Activated CD4-positive, alpha-beta T cell treated with anti-CD3 and anti-CD28 coated beads for 36 hours (primary cell): ENCODE measurements at regions of chr2 and their contacts with region 1.

Region 1: DNA sequence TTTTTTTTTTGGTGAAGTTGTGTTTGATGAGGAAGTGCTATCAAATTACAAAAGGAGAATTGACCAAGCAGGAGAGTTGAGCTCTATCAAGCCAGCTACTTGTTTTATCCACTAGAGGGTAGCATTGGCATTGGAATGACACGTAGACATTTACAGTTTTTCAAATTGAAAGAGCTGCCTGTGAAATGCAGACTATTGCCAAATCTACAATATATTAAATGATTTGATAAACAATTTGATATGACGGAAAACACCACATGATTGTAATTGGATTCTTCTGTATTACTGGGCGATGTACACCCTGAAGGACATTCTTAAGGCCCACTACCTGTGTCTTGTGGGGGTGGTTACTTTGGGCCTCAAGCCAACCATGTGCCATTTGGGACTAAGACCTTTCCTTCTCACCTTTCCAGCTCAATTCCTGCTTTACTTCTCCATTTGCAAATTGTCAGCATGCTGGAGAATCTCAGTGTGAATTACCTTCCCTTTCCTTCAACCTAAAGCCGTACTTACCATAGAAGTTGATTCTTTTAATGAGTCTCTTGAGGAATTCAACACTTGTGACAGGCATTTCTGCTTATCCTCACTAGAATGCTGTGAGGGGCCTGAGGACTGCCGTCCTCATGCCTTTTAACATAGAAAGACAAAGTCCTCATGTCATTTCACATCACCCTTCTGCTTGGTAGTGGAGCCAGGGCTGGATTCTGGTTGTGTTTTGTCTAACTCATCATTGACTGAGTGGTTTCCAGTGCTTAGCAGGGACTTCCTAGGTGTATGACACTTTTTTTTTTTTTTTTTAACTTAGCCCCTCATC is 134.8 kb upstream of the THUMPD2 start:
- DNase-seq: no peak
- ATAC-seq: peak; percentile 72
- H3K4me3 Mint-ChIP-seq: no peak overlapping the region
- H3K27ac Mint-ChIP-seq: peak overlapping the region; percentile 67
- H3K4me1 Mint-ChIP-seq: peaks cover 29% of the 10 kb centered on the region
- H3K27me3 Mint-ChIP-seq: peaks cover 11% of the 10 kb centered on the region

Region 2: DNA sequence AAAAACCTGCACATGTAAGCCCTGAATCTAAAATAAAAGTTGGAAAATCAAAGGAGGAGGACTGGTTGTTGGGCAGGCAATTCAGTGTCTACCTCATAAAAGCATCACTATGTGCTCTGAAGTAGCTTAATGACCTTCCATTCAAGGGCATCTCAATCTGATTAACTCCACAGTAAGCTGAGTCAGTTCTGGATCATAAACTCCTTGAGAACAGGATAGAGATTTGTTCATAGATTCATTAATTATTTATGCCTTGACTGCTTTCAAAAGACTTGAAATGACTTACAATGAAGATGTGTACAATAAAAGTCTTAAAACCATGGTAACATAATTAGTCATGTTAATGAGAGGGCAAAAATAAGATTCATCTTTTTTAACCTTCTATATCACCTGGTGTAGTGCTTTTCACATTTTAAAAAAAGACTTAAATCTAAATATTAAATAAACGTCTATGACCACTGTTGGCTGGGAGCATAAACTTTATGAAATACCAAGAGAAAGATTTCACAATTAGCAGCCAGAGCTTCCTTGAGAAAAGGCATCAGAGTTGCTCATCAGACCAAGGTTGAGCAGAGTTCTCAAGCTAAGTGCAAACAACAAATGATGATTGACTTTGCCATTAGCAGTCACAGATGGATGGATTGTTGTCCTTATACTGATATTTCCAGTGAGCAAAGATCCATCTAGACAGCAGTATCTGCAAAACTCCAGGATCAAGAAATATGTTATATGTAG is 102.5 kb after region 1 on chr2:
- CTCF ChIA-PET with region 1: no interaction called
- POLR2A ChIA-PET with region 1: no interaction called
- intact Hi-C with region 1: no loop called
- DNase-seq: no peak
- ATAC-seq: no peak
- H3K4me3 Mint-ChIP-seq: no peak overlapping the region
- H3K27ac Mint-ChIP-seq: no peak overlapping the region
- H3K4me1 Mint-ChIP-seq: no peaks in the 10 kb centered on the region
- H3K27me3 Mint-ChIP-seq: no peaks in the 10 kb centered on the region

Region 3: DNA sequence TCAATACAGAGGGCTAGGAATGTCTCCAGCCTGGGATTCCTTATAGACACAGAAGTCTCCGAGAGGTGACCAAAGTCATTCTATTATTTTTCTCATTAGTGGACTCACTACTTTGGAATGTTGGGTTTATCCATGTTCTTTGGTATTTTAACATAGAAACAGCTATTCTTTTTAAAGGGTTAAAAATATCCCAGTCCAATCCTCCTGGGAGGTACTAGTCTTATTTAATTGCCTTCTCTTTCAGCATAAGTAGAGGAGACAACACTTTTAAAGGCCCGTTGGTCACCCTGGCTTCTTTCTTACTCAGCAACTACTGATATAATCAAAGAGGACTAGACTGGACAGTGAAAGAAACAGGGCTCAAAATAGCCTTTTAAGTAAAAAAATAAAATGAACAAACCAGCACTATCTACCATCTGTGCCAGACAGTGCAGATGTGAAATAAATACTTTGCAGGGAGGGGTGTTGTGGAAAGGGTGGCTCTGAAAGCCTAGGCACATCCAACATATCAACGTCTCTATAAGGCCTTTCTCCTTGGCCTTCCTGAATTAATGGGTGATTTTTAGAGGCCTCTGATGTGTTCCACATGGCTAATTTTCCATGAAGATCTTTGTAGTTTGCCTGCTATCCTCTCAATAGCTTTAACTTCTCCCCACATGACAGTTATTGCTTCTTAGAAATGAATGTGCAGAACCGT is 199.6 kb after region 1 on chr2:
- CTCF ChIA-PET with region 1: no interaction called
- POLR2A ChIA-PET with region 1: no interaction called
- intact Hi-C with region 1: no loop called
- DNase-seq: no peak
- ATAC-seq: no peak
- H3K4me3 Mint-ChIP-seq: no peak overlapping the region
- H3K27ac Mint-ChIP-seq: no peak overlapping the region
- H3K4me1 Mint-ChIP-seq: no peaks in the 10 kb centered on the region
- H3K27me3 Mint-ChIP-seq: no peaks in the 10 kb centered on the region

Region 4: DNA sequence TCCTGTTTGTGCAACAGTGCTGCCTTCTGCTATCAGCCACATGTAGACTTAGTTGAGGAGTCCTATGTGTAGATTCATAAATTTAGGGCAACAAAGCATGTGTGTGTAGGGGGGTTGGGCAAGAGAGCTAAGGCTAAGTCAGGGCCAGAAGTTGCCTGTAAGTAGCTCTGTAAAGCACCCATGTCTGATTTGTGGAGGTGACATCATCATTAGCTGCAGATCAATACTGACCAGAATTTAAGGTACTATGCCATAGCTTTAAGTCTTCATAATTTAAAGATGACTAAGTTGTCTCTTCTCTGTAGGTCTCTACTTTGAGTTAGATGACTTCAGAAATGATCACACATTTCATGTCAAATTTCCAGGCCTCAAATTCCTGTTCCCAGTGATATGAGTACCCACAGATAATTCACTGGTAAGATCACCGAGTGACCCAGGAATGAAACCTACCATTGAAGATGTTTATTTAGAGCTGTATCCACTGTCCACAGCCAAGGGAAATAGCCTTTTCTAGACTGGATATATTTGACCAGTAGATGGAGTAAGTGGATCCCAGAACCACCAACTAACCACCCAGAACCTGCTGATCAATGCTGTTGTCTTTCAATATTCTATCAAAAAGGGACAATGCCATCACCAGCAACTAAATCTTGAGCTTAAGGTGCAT is 299.1 kb after region 1 on chr2:
- CTCF ChIA-PET with region 1: interaction called, 8 read pairs
- POLR2A ChIA-PET with region 1: interaction called, 3 read pairs
- intact Hi-C with region 1: loop called (anchors 10 kb)
- DNase-seq: no peak
- ATAC-seq: no peak
- H3K4me3 Mint-ChIP-seq: no peak overlapping the region
- H3K27ac Mint-ChIP-seq: peak overlapping the region; percentile 14
- H3K4me1 Mint-ChIP-seq: peaks cover 26% of the 10 kb centered on the region
- H3K27me3 Mint-ChIP-seq: no peaks in the 10 kb centered on the region

Region 5: GRCh38 chr2:40448468-40449079 is 534.7 kb after region 1 on chr2:
- CTCF ChIA-PET with region 1: interaction called, 5 read pairs
- POLR2A ChIA-PET with region 1: no interaction called
- intact Hi-C with region 1: loop called (anchors 5 to 10 kb)
- DNase-seq: peak; percentile 31
- ATAC-seq: no peak
- H3K4me3 Mint-ChIP-seq: no peak overlapping the region
- H3K27ac Mint-ChIP-seq: no peak overlapping the region
- H3K4me1 Mint-ChIP-seq: peaks cover 22% of the 10 kb centered on the region
- H3K27me3 Mint-ChIP-seq: peaks cover 39% of the 10 kb centered on the region

Region 6: GRCh38 chr2:40760071-40760666 is 846.3 kb after region 1 on chr2:
- CTCF ChIA-PET with region 1: interaction called, 3 read pairs
- POLR2A ChIA-PET with region 1: no interaction called
- intact Hi-C with region 1: loop called (anchors 2 to 5 kb)
- DNase-seq: peak; percentile 35
- ATAC-seq: peak; percentile 68
- H3K4me3 Mint-ChIP-seq: no peak overlapping the region
- H3K27ac Mint-ChIP-seq: no peak overlapping the region
- H3K4me1 Mint-ChIP-seq: peaks cover 4% of the 10 kb centered on the region
- H3K27me3 Mint-ChIP-seq: no peaks in the 10 kb centered on the region

Region 7: GRCh38 chr2:41414486-41415230 is 1500.8 kb after region 1 on chr2:
- CTCF ChIA-PET with region 1: no interaction called
- POLR2A ChIA-PET with region 1: no interaction called
- intact Hi-C with region 1: loop called in 1 of 2 experiments (anchors 10 kb)
- DNase-seq: peak; percentile 4
- ATAC-seq: no peak
- H3K4me3 Mint-ChIP-seq: no peak overlapping the region
- H3K27ac Mint-ChIP-seq: no peak overlapping the region
- H3K4me1 Mint-ChIP-seq: no peaks in the 10 kb centered on the region
- H3K27me3 Mint-ChIP-seq: no peaks in the 10 kb centered on the region

Region 8: GRCh38 chr2:41782306-41783158 is 1868.7 kb after region 1 on chr2:
- CTCF ChIA-PET with region 1: interaction called, 6 read pairs
- POLR2A ChIA-PET with region 1: no interaction called
- intact Hi-C with region 1: loop called (anchors 2 kb)
- DNase-seq: peak; percentile 52
- ATAC-seq: no peak
- H3K4me3 Mint-ChIP-seq: no peak overlapping the region
- H3K27ac Mint-ChIP-seq: no peak overlapping the region
- H3K4me1 Mint-ChIP-seq: no peaks in the 10 kb centered on the region
- H3K27me3 Mint-ChIP-seq: peaks cover 6% of the 10 kb centered on the region